Panc1 (cell line): ENCODE measurements at regions of chr19 and their contacts with region 1.

Region 1: GRCh38 chr19:40221858-40222837 is 4.0 kb upstream of the TTC9B start:
- DNase-seq: peak; percentile 100
- ATAC-seq: peak; percentile 23
- H3K4me3 ChIP-seq: no peak overlapping the region
- H3K27ac ChIP-seq: no peak overlapping the region
- H3K4me1 ChIP-seq: peaks cover 39% of the 10 kb centered on the region
- H3K27me3 ChIP-seq: peaks cover 26% of the 10 kb centered on the region
- CTCF ChIP-seq: no peak

Region 2: DNA sequence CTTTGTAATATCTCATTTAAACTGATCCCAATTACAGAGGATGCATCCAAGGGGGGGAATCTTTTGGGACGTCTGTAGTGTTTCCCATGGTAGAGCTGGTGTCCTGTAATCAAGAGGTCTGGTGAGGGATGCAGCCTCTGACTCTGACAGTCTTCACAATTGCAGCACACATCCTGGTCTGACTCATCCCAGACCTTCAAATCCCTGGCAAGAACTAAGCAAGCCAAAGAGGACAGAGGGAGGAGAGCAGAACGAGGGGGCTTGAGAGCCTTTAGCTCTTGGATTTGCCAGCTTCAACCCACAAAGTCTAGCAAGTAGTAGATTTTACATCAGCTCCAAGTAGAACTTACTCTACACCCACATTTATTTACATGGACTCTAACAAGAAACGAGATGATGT is 270.5 kb before region 1 on chr19:
- CTCF ChIA-PET with region 1: no interaction called
- POLR2A ChIA-PET with region 1: interaction called, 10 read pairs
- in situ Hi-C with region 1: no loop called
- intact Hi-C with region 1: no loop called
- DNase-seq: no peak
- ATAC-seq: peak; percentile 20
- H3K4me3 ChIP-seq: no peak overlapping the region
- H3K27ac ChIP-seq: no peak overlapping the region
- H3K4me1 ChIP-seq: no peaks in the 10 kb centered on the region
- H3K27me3 ChIP-seq: no peaks in the 10 kb centered on the region
- CTCF ChIP-seq: no peak

Region 3: DNA sequence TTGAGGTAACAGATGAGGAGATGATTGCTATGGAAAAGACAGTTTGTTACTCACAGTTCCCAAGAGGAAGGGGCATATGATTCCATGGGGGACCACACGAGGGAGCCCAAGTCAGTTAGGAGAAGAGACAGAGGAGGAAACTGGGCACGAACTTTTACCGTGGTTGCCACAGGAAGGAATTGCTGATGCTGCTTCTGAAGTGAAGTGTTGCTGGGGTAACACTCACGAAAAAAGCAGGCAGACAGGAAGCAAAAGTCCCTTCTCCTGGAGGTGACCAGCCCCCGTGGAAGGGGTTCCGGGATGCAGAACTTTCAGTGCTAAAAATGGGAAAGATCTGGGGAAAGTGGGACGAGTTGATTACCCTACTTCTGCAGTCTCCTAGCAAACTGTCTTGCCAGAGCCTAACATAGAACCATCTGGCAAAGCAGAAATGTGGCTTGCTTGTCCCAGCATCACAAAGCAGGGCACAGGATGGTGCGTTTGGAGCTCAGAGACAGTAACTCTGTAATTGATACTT is 66.3 kb before region 1 on chr19:
- CTCF ChIA-PET with region 1: interaction called, 40 read pairs
- POLR2A ChIA-PET with region 1: interaction called, 16 read pairs
- in situ Hi-C with region 1: no loop called
- intact Hi-C with region 1: loop called (anchors 1 kb)
- DNase-seq: peak; percentile 99
- ATAC-seq: peak; percentile 90
- H3K4me3 ChIP-seq: peak overlapping the region in 1 of 2 experiments; percentile 5; a peak in 2 of 4 replicates
- H3K27ac ChIP-seq: no peak overlapping the region
- H3K4me1 ChIP-seq: 0 out of 2 replicates have a peak, but pooled peaks cover 2% of the 10 kb centered on the region
- H3K27me3 ChIP-seq: no peaks in the 10 kb centered on the region
- CTCF ChIP-seq: no peak

Region 4: DNA sequence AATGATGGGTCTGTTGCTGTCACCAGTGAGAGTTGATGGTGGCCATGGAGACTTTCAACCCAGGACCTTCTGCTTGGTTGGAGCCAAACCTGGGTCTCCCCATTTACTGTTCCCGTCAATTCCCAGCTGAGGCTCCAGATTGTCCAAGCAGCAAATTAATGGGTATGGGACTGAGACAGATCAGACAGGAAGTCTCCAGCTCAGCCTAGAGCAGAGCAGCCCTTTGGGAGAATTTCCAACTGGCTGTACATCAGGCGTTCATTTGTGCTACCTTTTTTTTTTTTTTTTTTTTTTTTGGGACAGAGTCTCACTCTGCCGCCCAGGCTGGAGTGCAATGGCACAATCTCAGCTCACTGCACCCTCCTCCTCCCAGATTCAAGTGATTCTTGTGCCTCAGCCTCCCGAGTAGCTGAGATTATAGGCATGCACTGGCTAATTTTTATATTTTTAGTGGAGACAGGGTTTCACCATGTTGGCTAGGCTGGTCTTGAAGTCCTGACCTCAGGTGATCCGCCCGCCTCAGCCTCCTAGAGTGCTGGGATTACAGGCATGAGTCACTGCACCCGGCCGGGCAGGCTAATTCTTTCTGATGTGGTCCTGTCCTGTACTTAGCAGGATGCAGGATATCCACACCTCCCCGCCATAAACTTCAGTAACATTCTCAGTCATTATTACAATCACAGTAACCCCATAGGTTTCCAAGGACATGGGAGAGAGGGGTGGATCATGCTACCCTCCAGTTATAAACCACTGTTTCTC is 21.6 kb before region 1 on chr19:
- CTCF ChIA-PET with region 1: interaction called, 33 read pairs
- POLR2A ChIA-PET with region 1: interaction called, 12 read pairs
- in situ Hi-C with region 1: no loop called
- intact Hi-C with region 1: no loop called
- DNase-seq: no peak
- ATAC-seq: peak; percentile 7; the same call in 1 of the 2 replicates
- H3K4me3 ChIP-seq: no peak overlapping the region
- H3K27ac ChIP-seq: no peak overlapping the region
- H3K4me1 ChIP-seq: no peaks in the 10 kb centered on the region
- H3K27me3 ChIP-seq: no peaks in the 10 kb centered on the region
- CTCF ChIP-seq: no peak

Region 5: DNA sequence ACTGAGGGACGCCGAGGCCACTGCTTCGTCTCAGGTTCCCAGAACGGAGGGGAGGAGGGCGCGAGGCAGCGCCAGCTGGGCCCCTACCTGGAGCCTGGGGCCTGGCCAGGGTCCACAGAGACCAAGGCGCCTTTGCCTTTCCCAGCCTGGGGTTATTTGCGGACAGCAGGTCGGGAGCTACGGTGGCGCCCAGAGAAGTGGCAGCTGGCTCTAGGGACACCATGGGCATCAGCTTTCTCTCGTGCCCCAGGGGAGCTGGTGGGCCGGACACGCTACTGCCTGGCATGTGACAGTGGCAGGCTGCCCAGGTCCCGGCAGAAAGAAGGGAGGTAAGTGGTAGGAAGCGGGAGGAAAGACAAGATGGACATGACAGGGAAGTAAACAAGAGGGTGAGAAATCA is 44.0 kb after region 1 on chr19:
- CTCF ChIA-PET with region 1: interaction called, 4 read pairs
- POLR2A ChIA-PET with region 1: interaction called, 6 read pairs
- in situ Hi-C with region 1: loop called (anchors 5 kb)
- intact Hi-C with region 1: no loop called
- DNase-seq: no peak
- ATAC-seq: no peak
- H3K4me3 ChIP-seq: no peak overlapping the region
- H3K27ac ChIP-seq: no peak overlapping the region
- H3K4me1 ChIP-seq: no peaks in the 10 kb centered on the region
- H3K27me3 ChIP-seq: no peaks in the 10 kb centered on the region
- CTCF ChIP-seq: no peak

Region 6: DNA sequence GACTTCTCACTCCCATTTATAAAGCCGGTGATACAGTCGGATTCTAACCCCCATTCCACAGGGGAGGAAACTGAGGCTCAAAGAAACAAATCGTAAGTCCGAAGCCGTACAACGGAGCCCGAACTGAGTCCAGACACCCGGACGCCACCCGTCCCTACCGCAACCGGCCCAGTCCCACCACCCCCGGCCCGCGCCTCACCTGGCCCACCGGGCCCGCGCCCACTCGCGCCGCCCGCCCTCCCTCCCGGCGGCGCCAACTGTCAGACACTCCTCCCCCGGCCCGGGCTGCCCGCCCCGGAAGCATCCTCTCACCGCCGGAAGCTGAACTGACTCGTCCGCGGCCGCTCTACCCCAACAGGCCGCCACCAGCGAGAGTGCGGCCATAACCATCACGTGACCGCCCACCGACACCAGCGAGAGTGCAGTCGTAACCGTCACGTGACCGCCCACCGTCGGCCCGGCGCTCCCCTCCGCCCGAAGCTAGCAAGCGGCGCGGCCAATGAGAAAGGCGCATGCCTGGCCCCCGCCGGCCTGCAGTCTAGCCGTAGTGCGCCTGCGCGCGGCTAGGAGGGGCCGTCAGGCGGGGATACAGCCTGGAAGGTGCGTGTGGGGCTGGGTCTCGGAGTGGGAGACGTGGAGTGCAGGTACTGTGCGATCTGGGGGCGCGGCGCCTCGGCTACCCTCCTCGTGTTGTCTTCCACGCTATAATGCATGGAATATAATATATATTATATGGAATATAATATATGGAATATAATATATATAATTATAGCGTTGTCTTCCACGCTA is 126.2 kb after region 1 on chr19 and contains the starts of genes C19orf47 and PLD3:
- CTCF ChIA-PET with region 1: no interaction called
- POLR2A ChIA-PET with region 1: no interaction called
- in situ Hi-C with region 1: no loop called
- intact Hi-C with region 1: no loop called
- DNase-seq: peak; percentile 78
- ATAC-seq: peak; percentile 99
- H3K4me3 ChIP-seq: peak within 1 kb of the TSS; percentile 80 to 98
- H3K27ac ChIP-seq: peak within 1 kb of the TSS; percentile 85
- H3K4me1 ChIP-seq: peaks cover 3% of the 10 kb centered on the region; the same call in 1 of the 2 replicates
- H3K27me3 ChIP-seq: no peaks in the 10 kb centered on the region
- CTCF ChIP-seq: no peak
- total RNA-seq, gene C19orf47: 29.0 TPM
- total RNA-seq, gene PLD3: 81.8 TPM